AG04449 (cell line): ENCODE measurements at regions of chr5 and their contacts with region 1.

Region 1: DNA sequence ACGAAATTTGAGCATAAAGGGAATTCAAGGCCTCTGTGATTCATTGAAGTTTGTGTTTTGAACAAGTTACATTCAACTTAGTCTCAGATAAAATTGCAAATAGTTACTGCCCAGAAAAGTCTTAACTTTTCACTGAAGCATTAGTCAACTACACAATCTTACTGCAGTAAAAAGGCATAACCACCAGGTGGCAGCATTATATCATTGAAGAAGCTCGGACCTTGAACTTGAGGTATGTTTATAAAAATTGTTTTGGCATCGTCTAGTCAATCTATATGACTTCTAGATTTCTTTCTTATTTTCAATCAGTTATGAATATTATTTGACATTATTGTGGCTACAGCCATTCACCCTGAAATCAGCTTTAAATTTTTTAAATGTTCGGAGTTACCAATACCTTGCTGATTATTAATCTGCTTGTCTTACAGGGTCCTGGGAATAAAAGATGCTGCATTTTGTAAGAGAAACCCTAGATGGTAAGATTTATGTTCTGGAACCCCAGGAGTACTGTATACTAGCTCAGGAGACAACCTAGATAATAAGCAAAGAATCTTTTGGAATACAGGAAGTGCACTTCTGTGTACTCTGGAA is 83.9 kb upstream of the GRAMD2B start:
- DNase-seq: peak; percentile 41
- H3K4me3 ChIP-seq: no peak overlapping the region
- CTCF ChIP-seq: peak; percentile 46

Region 2: DNA sequence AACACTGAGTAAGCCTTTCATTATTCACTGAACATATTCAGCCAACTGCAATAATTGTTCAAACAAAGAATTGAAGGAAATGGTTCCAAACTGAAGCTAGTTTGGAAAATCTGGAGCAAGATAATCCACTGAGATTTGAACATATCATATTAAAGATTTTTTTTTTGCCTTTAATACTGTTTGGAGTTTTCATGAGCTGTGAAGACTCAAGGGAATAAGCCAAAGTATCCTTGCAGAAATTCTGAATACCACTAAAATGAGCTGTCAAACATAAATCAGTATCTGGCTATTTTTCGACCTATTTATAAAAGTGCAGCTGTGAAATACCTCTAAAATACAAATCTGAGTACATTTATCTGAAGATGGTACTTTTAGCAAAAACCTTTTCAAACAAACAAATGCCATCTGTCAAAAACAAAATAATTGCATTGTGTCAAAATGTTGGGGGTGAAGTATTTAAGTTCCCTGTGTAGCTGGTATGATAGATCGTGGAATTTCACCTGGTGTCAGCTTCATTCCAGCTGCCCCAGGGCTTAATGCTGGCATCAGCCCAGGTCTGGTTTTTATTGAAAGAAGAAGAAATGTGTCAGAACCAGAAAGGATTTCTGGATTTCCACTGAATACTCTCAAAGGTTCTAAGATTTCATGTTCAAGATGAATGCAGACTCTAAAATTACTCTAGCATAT is 65.1 kb before region 1 on chr5:
- CTCF ChIA-PET with region 1: no interaction called
- POLR2A ChIA-PET with region 1: no interaction called
- DNase-seq: no peak
- H3K4me3 ChIP-seq: no peak overlapping the region
- CTCF ChIP-seq: no peak

Region 3: DNA sequence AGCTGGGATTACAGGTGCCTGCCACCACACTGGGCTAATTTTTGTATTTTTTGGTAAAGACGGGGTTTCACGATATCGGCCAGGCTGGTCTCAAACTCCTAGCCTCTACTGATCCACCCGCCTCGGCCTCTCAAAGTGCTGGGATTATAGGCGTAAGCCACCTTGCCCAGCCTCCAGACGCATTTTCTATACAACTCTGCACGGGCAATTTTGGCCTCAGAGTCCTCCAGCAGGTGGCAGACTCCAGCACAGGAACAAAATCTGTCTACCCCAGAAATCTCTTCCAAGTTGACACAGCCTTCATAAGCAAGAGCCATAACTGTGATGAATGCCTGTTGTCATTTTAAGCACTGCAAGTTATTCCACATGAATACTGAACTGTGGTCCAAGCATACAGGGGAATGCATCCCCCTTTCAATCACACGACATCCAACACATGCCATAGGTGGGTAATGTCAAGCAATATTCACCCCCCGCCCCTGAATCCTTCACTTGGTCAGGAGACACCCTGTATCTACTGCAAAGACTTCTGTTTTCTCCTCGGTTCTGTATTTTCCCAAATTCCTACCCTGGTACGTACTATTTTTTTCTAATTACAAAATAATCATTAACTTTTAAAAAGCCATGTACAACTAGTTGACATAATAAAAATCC is 204.9 kb after region 1 on chr5:
- CTCF ChIA-PET with region 1: interaction called, 369 read pairs
- POLR2A ChIA-PET with region 1: no interaction called
- DNase-seq: no peak
- H3K4me3 ChIP-seq: no peak overlapping the region
- CTCF ChIP-seq: peak; percentile 45

Region 4: DNA sequence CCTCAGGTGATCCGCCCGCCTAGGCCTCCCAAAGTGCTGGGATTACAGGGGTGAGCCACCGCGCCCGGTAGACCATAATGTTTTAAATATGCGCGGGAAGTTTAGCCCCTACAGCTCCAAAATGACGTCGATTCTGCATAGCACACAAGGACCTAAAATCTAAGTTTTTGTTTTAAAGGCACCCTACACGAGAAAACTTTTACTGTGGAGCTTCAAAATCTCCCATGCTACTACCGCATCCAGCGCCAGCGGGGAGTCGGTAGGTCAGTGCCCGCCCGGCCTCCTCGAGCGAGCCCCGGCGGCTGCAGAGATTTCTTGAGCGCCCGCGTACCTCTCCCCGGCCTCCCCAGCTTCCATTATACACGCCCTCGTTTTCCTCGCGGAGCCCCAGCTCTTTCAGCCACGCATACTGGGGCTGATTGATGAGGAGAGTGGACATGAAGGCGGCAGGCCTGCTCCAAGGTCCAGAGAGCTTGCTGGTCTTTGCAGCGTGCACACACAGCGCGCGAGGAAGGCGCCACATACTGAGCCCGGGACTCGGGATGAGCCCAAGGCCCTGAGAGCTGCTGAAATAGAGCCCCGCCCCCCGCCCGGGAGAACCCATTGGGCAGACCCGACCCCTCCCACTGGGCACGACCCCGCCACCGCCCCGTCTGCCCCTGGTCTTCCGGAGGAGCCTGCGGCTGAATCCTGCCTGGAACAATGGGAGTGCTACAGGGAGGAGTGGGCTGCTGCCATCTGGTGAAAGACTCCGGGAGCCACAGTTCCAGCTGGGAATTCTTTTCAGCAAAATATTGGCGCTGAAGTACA is 255.6 kb after region 1 on chr5 and contains the start of gene ALDH7A1:
- CTCF ChIA-PET with region 1: interaction called, 57 read pairs
- POLR2A ChIA-PET with region 1: no interaction called
- DNase-seq: peak; percentile 44
- H3K4me3 ChIP-seq: peak within 1 kb of the TSS; percentile 76
- CTCF ChIP-seq: peak; percentile 71